ENCODE measurements at regions of chr16 and their contacts with region 1.

Region 1: DNA sequence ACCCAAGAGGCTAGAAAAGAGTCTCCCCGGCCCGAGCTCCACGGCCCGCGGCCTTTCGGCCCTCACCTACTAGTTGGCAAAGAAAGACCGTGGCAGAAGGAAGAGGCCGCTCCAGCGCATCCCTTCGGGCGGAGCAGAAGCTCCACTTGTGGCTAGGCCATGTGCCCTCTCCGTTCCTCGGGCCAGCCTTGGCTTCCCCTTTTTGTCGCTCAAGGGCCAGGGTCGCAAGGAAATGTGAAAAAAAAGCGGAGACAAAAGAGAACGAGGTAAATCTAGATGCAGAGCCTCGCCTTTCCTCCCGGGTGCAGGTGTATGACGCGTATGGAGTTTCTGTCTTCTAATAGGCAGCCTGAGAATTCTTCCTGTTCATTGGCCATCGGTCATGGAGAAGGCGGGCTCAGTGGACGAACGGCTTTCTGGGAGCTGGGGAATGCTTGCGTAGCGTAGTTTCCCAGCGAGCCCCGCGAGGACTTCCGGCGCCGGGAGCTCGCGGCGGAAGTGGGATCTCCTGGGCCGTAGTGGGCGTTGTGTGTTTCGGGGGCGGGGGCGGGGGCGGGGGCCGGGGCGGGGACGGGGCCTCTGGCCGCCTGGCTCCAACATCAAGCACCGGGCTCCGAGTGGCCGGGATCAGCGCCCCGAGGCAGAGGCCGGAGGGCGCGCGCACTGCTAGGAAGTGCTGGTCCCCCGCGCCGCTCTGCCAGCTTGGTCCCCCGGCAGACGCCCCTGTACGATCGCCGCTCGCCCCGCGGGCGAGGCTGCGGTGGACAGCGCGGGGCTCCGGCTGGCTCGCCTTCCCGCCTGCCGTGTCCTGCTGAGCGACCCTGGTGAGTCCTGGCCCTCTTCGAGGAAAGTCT is at the start of gene ZNF213:
- DNase-seq: peak; percentile 96
- H3K4me3 Mint-ChIP-seq: peak within 1 kb of the TSS; percentile 83
- H3K27ac Mint-ChIP-seq: peak within 1 kb of the TSS; percentile 70
- H3K4me1 Mint-ChIP-seq: peaks cover 11% of the 10 kb centered on the region
- H3K27me3 Mint-ChIP-seq: no peaks in the 10 kb centered on the region
- CTCF ChIP-seq: no peak
- total RNA-seq, gene ZNF213: 9.8 and 11.8 TPM in 2 replicates

Region 2: GRCh38 chr16:3123986-3124886 is 10.6 kb before region 1 on chr16:
- CTCF ChIA-PET with region 1: interaction called, 18 read pairs
- intact Hi-C with region 1: no loop called
- DNase-seq: peak; percentile 98
- H3K4me3 Mint-ChIP-seq: peak overlapping the region; percentile 99
- H3K27ac Mint-ChIP-seq: peak overlapping the region; percentile 88
- H3K4me1 Mint-ChIP-seq: peaks cover 19% of the 10 kb centered on the region
- H3K27me3 Mint-ChIP-seq: no peaks in the 10 kb centered on the region
- CTCF ChIP-seq: no peak

Region 3: GRCh38 chr16:3150346-3151218 is 15.8 kb after region 1 on chr16:
- CTCF ChIA-PET with region 1: interaction called, 19 read pairs
- intact Hi-C with region 1: no loop called
- DNase-seq: peak; percentile 99
- H3K4me3 Mint-ChIP-seq: peak overlapping the region; percentile 89
- H3K27ac Mint-ChIP-seq: peak overlapping the region; percentile 98
- H3K4me1 Mint-ChIP-seq: peaks cover 20% of the 10 kb centered on the region
- H3K27me3 Mint-ChIP-seq: peaks cover 3% of the 10 kb centered on the region
- CTCF ChIP-seq: no peak

Region 4: DNA sequence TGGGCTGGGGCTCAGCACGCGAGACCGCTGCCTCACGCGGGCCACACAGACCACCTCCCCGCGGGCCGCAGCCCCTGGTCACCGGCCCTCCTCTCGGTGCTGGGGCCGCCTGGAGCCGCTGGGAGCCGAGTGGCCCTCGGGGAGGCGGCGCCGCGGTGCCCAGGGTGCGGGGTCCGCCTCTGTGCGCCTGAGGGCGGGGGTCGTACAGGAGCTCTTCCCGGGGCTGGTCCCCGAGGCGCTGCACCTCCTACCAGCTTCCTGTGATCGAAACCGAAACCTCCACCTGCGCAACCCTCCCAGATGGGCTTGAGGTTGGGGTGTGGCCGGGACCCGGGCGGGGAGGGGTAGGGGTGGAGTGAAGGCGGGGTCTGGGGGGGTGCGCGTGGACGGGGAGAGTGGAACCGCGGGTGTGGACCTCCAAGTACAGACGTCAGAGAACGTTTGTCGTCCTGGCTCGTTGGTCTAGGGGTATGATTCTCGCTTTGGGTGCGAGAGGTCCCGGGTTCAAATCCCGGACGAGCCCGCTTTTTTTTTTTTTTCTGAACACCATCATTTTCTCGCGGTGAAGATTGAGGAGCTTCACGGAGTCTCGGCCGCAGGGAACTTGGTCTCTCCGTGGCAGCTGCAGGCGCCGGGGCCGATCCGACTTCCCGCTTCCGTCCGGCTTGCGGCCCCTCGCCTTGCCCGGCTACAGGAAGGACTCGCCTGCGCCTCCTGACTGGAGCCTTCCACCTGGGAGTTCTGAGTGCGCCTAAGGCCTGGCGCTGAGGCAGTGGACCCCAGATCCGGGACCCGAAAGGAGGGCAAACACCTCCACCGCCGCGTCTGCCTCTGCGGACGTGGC is 23.9 kb after region 1 on chr16:
- CTCF ChIA-PET with region 1: interaction called, 19 read pairs
- intact Hi-C with region 1: no loop called
- DNase-seq: peak; percentile 98
- H3K4me3 Mint-ChIP-seq: peak overlapping the region; percentile 84
- H3K27ac Mint-ChIP-seq: peak overlapping the region; percentile 77
- H3K4me1 Mint-ChIP-seq: peaks cover 18% of the 10 kb centered on the region
- H3K27me3 Mint-ChIP-seq: no peaks in the 10 kb centered on the region
- CTCF ChIP-seq: no peak

Region 5: GRCh38 chr16:3854750-3855541 is 720.2 kb after region 1 on chr16:
- CTCF ChIA-PET with region 1: no interaction called
- intact Hi-C with region 1: no loop called
- DNase-seq: no peak
- H3K4me3 Mint-ChIP-seq: no peak overlapping the region
- H3K27ac Mint-ChIP-seq: no peak overlapping the region
- H3K4me1 Mint-ChIP-seq: peaks cover 36% of the 10 kb centered on the region
- H3K27me3 Mint-ChIP-seq: no peaks in the 10 kb centered on the region
- CTCF ChIP-seq: no peak